ENCODE measurements at regions of chr1 and their contacts with region 1.

Region 1: GRCh38 chr1:226407497-226408284 is at the start of gene PARP1:
- DNase-seq: peak; percentile 94
- total RNA-seq, gene PARP1: 87.1 TPM

Region 2: GRCh38 chr1:226308723-226309315 is 98.9 kb before region 1 on chr1 and contains the start of gene LIN9:
- intact Hi-C with region 1: loop called (anchors 2 kb)
- DNase-seq: peak; percentile 96
- total RNA-seq, gene LIN9: 13.1 TPM

Region 3: GRCh38 chr1:226365831-226366231 is 41.9 kb before region 1 on chr1:
- intact Hi-C with region 1: loop called (anchors 2 kb)
- DNase-seq: no peak